OCI-LY7 (cell line): ENCODE measurements at regions of chr10 and their contacts with region 1.

Region 1: DNA sequence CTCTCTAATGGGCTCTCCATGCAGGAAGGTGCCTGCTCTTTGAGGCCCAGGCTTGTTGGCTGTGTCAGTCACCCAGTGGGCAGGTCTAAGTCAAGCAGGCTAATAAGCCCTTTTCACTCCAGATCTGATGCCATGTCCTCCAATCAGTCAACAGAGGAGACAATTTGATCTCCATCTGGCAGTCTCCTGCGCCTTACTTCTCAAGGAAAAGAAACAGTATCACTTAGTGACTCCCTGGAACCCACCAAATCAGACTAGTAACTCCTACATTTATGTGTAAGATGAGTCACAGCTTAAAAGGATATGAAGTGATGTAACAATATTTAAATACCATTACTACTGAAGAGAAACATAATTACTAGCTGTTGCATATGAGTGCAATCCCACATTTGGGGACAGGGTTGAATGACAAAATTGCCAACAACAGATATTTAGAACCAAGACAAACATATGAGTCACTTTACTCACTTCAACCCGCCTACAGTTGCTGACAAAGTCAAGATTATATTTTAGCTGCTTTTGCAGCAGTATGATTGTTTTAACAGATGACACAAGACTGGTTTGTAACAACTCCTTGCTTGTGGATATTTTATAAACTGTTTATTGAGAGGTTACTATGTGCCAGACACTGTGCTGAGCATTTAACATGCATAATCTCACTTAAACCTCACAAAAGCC is 72.1 kb downstream of the USP6NL start:
- DNase-seq: no peak
- H3K4me3 ChIP-seq: no peak overlapping the region
- H3K27ac ChIP-seq: peak overlapping the region; percentile 17
- H3K4me1 ChIP-seq: peaks cover 79% of the 10 kb centered on the region
- CTCF ChIP-seq: no peak

Region 2: DNA sequence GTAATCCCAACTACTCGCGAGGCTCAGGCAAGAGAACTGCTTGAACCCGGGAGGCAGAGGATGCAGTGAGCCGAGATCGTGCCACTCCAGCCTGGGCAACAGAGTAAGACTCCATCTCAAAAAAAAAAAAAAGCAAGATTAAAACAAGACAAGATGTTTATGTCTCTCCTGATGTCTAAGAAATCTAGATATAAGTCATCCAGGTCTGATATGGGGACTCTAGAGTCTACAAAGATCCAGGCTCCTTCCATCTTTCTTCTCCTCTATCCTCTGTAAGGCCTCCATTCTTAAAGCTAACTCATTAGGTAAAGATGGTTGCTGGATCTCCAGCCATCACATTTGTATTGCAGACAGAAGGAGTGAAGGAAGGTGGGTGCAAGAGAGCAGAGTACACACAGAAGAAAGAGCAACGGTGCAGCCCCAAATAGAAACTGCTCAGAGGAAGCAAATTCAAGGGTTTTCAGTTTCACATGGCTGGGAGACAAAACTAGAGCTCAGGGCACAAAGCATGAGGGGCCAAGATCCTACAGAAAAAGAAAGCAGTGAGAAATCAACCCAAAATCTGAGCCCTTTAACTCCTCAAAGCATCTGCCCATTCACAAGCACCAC is 14.5 kb after region 1 on chr10:
- CTCF ChIA-PET with region 1: no interaction called
- POLR2A ChIA-PET with region 1: interaction called, 21 read pairs
- intact Hi-C with region 1: loop called (anchors 2 kb)
- DNase-seq: peak; percentile 82
- H3K4me3 ChIP-seq: peak overlapping the region; percentile 56
- H3K27ac ChIP-seq: peak overlapping the region; percentile 90
- H3K4me1 ChIP-seq: peaks cover 74% of the 10 kb centered on the region
- CTCF ChIP-seq: no peak